GM10248 (cell line): ENCODE measurements at regions of chr16 and their contacts with region 1.

Region 1: DNA sequence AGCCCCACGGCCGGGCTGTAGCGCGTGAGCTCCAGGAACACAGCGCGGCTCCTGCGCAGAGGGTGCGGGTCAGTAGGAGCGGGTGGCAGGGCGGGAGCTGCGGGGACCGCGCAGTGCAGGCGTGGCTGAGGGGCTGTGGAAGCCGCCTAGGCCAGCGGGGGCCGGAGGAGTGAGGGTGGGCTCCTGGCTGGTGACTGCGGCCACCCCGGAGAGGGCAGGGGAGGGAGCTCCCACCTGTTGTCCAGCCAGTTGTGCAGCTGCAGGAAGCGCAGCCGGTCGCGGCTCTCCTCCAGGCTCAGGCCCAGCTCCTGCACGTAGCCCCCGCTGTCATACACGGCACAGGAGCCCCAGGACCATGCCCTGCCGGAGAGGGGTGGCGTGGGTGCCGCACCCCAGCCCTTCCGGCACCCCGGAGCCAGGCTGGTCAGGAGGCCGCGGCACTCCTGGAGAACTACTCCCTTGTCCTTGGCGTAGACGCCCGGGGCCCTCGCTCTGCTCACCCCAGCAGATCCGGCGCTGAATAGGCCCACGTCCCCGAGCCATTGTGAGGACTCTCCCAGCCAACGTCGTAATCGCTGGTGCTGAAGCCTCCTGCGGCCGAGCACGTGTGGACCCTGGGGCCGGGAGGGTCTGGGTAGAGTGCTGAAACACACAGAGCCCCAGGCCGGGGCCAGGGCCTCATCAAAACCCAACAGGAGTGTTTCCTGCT is 43.9 kb downstream of the TSC2 start:
- DNase-seq: no peak
- CTCF ChIP-seq: no peak

Region 2: GRCh38 chr16:2003827-2004641 is 87.7 kb before region 1 on chr16:
- CTCF ChIA-PET with region 1: no interaction called
- POLR2A ChIA-PET with region 1: no interaction called
- DNase-seq: peak; percentile 93
- CTCF ChIP-seq: peak; percentile 90

Region 3: GRCh38 chr16:2047330-2048115 is 44.2 kb before region 1 on chr16 and contains the starts of genes NTHL1 and TSC2:
- CTCF ChIA-PET with region 1: no interaction called
- POLR2A ChIA-PET with region 1: interaction called, 11 read pairs
- DNase-seq: peak; percentile 98
- CTCF ChIP-seq: no peak

Region 4: GRCh38 chr16:2447920-2448583 is 356.4 kb after region 1 on chr16:
- CTCF ChIA-PET with region 1: no interaction called
- POLR2A ChIA-PET with region 1: no interaction called
- DNase-seq: no peak
- CTCF ChIP-seq: no peak

Region 5: GRCh38 chr16:2531767-2532493 is 440.2 kb after region 1 on chr16:
- CTCF ChIA-PET with region 1: no interaction called
- POLR2A ChIA-PET with region 1: no interaction called
- DNase-seq: peak; percentile 98
- CTCF ChIP-seq: no peak